T-cell (primary cell): ENCODE measurements at regions of chr2 and their contacts with region 1.

Region 1: GRCh38 chr2:107657049-107657448 is 169.6 kb upstream of the RGPD4 start:
- DNase-seq: no peak
- ATAC-seq: no peak
- H3K4me3 ChIP-seq: no peak overlapping the region
- H3K4me3 Mint-ChIP-seq: no peak overlapping the region
- H3K27ac ChIP-seq: no peak overlapping the region
- H3K27ac Mint-ChIP-seq: no peak overlapping the region
- H3K4me1 ChIP-seq: no peaks in the 10 kb centered on the region
- H3K4me1 Mint-ChIP-seq: no peaks in the 10 kb centered on the region
- H3K27me3 ChIP-seq: no peaks in the 10 kb centered on the region
- H3K27me3 Mint-ChIP-seq: no peaks in the 10 kb centered on the region

Region 2: DNA sequence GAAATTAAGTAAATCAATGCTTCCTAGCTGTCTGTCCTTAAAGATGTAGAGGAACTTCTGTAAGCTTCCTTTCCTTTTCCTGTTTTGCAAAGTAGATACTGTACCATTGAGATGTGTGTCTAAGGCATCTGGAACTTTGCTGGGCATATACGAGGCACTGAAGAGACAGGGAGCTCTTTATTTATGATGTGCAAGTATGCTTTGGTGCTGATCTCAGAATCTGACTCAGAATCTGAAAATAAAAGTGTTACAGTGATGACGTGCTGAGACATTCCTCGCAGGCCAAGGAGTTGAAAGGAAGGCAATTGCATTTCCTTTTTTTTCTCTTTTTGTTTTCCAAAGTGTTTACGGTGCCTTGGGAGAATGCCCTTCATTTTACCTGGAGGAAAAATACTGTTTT is 61.3 kb before region 1 on chr2:
- CTCF ChIA-PET with region 1: no interaction called
- POLR2A ChIA-PET with region 1: interaction called in 1 of 2 experiments, 18 read pairs
- DNase-seq: no peak
- ATAC-seq: no peak
- H3K4me3 ChIP-seq: no peak overlapping the region
- H3K4me3 Mint-ChIP-seq: no peak overlapping the region
- H3K27ac ChIP-seq: no peak overlapping the region
- H3K27ac Mint-ChIP-seq: no peak overlapping the region
- H3K4me1 ChIP-seq: no peaks in the 10 kb centered on the region
- H3K4me1 Mint-ChIP-seq: no peaks in the 10 kb centered on the region
- H3K27me3 ChIP-seq: no peaks in the 10 kb centered on the region
- H3K27me3 Mint-ChIP-seq: no peaks in the 10 kb centered on the region

Region 3: GRCh38 chr2:107635883-107636282 is 21.2 kb before region 1 on chr2:
- CTCF ChIA-PET with region 1: no interaction called
- POLR2A ChIA-PET with region 1: no interaction called
- DNase-seq: no peak
- ATAC-seq: no peak
- H3K4me3 ChIP-seq: no peak overlapping the region
- H3K4me3 Mint-ChIP-seq: no peak overlapping the region
- H3K27ac ChIP-seq: no peak overlapping the region
- H3K27ac Mint-ChIP-seq: no peak overlapping the region
- H3K4me1 ChIP-seq: no peaks in the 10 kb centered on the region
- H3K4me1 Mint-ChIP-seq: no peaks in the 10 kb centered on the region
- H3K27me3 ChIP-seq: no peaks in the 10 kb centered on the region
- H3K27me3 Mint-ChIP-seq: no peaks in the 10 kb centered on the region